Activated T-helper 2 cell treated with anti-CD3 and anti-CD28 coated beads, Interferon-gamma antibody, Interleukin-2, Interleukin-4, amounts not matched to agents 10 μg/mL and 5 μg/mL and 100 μg/mL, durations not matched to agents 14 hours and 24 hours and 36 hours (primary cell): ENCODE measurements at regions of chr17 and their contacts with region 1.

Region 1: DNA sequence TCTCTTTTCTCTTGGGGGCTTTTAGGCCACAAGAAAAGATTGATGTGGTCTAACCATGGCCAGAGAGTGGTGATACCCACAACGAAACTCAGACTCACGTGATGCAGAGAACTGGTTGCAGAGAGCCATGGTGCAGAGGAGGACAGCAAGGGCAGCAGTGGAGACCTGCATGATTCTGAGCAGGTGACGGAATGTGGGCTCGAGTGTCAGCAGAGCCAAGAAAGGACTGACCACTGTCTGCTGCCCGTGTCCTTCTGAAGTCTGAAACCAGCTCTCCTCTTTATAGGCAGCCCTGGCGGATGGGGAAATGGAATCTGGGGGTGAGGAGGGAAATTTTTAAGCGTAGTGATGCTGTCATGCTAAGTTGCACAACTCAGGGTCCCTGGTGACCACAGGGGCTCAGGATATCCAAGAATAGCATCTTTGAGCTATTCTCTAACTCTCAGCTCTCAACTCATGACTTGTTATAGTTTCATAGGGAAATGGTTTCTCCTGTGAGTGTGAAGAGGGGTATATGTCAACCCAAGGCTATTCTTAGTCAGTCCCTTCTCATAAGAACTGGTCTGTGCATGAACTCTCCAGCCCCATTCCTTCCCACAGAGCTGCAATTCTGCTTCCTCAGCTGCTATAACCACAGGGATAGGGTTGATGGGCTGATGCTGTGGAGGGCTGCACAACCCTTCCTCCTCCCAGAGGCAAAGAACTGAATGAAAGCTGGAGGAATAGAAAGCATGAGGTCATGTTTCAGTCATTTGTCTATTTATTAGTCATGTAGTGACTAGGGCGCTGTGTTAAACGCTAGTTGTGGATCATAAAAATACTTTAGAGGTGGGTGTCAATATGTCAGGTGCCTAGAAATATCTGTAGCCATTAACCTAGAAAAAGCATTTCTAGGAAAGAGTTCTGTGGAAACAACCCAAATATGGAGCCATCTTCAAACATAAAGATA is at the start of gene CCL3:
- DNase-seq: no peak
- H3K4me3 Mint-ChIP-seq: peak within 1 kb of the TSS; percentile 56
- H3K27ac Mint-ChIP-seq: peak within 1 kb of the TSS; percentile 85
- H3K4me1 Mint-ChIP-seq: peaks cover 43% of the 10 kb centered on the region
- H3K27me3 Mint-ChIP-seq: peaks cover 25% of the 10 kb centered on the region
- total RNA-seq, gene CCL3: 218 and 222 TPM in 2 replicates

Region 2: DNA sequence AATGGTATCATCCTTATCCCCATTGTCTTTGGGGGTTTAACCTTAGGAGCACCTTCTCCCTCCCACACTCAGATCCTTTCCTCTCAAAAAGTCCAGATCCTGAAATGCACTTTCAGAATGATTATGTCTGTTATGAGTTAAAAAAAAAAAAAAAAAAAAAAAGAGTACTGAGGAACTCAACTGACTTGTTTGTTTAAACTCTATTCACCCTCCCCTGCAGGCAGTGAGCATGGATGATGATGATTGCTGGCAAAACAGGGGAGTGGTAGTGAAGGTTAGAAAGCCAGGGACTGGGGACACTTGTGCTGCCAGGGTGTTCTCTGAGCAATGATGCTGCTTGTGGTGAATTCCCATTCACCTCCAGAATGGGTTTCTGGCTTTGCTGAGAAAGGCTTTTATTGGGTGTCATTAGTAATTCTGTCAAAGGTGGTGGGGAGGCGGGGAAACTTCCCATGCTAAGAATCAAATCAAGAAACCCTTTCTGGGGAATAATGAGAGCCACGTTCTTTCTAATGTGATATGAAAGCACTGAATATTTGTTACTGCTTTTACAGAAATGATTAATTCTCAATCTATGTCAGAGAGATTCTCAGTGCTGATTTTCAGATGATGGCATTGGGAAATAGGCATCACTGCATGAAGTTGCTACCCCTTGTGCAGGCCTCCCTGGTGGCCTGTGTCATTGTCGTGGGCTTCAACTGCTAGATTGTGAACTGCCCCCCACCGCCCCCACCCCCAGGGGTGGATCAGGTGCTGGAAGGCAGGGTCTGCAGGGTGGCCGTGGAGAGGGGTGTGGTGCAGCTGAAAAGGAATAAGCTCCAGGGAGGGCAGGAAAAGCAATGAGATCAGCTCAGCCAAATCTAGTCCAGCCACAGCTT is 27.6 kb after region 1 on chr17:
- intact Hi-C with region 1: loop called (anchors 1 kb)
- DNase-seq: no peak
- H3K4me3 Mint-ChIP-seq: no peak overlapping the region
- H3K27ac Mint-ChIP-seq: peak overlapping the region; percentile 44
- H3K4me1 Mint-ChIP-seq: peaks cover 11% of the 10 kb centered on the region
- H3K27me3 Mint-ChIP-seq: no peaks in the 10 kb centered on the region